Pancreas (tissue), 10 donors: ENCODE measurements at regions of chr1 and their contacts with region 1.

Region 1: GRCh38 chr1:209860293-209860881 is 32.6 kb downstream of the UTP25 start:
- DNase-seq: peak; percentile 67 to 91 (median 80)
- ATAC-seq: peak; percentile 96 to 100 (median 96)
- H3K4me3 ChIP-seq: no peak overlapping the region
- H3K27ac ChIP-seq: no peak overlapping the region
- H3K4me1 ChIP-seq: no peaks in the 10 kb centered on the region
- H3K27me3 ChIP-seq: no peaks in the 10 kb centered on the region
- CTCF ChIP-seq: peak; percentile 64 to 91 (median 78)

Region 2: DNA sequence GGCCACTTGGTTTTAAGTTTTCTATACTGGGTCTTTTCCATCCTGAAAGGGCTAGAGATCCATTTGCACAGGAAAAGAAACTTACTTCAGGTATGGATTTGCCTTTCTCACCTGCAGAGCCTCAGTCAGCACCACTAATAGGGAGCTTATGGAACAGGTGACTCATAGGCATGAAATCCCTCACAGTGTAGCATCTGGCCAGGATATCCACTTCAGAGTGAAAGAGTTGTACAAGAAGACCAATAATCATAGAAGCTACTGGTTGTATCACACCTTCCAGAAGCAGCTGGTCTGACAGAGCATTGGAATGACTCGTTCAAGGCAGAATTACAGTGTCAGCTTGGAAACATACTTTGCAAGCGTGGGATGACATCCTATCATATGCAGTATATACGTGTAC is 51.4 kb after region 1 on chr1:
- intact Hi-C with region 1: no loop called
- DNase-seq: no peak
- ATAC-seq: no peak
- H3K4me3 ChIP-seq: no peak overlapping the region
- H3K27ac ChIP-seq: no peak overlapping the region
- H3K4me1 ChIP-seq: no peaks in the 10 kb centered on the region
- H3K27me3 ChIP-seq: no peaks in the 10 kb centered on the region
- CTCF ChIP-seq: no peak

Region 3: DNA sequence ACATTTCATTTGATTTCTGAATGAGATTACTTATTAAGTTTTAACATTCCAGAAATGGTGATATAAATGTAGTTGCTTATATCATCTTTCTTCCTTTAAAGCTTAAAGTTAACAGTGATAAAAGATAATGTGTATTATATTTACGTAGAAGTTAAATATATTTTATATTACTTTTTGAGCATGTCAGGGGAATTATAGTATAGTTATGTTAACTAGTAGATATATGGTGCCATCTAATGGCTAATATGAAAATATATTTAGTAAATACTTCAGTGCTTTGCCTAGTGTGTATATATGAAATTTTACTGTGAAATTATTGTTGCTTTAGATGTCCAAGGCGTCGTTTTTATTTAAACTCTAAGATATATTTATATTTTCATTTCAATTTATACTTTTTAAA is 129.1 kb after region 1 on chr1:
- intact Hi-C with region 1: loop called (anchors 5 to 10 kb)
- DNase-seq: no peak
- ATAC-seq: peak in 3 of 4 donors; percentile 54 to 66 (median 61)
- H3K4me3 ChIP-seq: no peak overlapping the region
- H3K27ac ChIP-seq: no peak overlapping the region
- H3K4me1 ChIP-seq: no peaks in the 10 kb centered on the region
- H3K27me3 ChIP-seq: no peaks in the 10 kb centered on the region
- CTCF ChIP-seq: peak in 1 of 4 donors; percentile 17